ENCODE measurements at regions of chr20 and their contacts with region 1.

Region 1: GRCh38 chr20:16279320-16279719 is 293.9 kb downstream of the KIF16B start:
- DNase-seq: peak in 1 of 2 experiments; percentile 31
- ATAC-seq: peak in 1 of 2 experiments; percentile 72; a peak in 4 of 6 replicates
- H3K4me3 ChIP-seq: no peak overlapping the region
- H3K27ac ChIP-seq: no peak overlapping the region
- H3K4me1 ChIP-seq: no peaks in the 10 kb centered on the region
- CTCF ChIP-seq: no peak
- EP300 ChIP-seq: no peak
- POLR2A ChIP-seq: no peak
- RAD21 ChIP-seq: peak; percentile 24 to 37; a peak in 2 of 5 replicates

Region 2: DNA sequence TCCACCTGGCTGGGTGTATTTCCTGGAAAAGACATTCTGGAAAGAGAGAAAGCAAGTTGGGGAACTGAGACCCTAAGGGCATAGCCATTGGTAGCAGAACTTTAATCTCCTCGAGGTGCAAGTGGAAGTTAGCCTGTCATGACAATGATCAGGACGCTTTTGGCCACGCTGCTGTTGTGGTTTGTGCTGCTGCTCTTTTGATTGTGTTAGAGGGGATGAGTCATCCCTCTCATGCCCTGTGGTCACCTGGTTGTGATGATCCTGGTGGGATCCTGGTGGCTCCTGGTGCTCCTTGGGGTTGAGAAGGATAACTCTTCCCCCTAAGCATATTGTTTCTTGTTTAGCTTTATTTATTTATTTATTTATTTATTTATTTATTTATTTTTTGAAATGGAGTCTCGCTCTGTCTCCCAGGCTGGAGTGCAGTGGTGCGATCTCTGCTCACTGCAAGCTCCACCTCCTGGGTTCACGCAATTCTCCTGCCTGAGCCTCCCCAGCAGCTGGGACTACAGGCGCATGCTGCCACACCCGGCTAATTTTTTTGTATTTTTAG is 56.4 kb before region 1 on chr20:
- CTCF ChIA-PET with region 1: no interaction called
- POLR2A ChIA-PET with region 1: no interaction called
- DNase-seq: no peak
- ATAC-seq: no peak
- H3K4me3 ChIP-seq: no peak overlapping the region
- H3K27ac ChIP-seq: no peak overlapping the region
- H3K4me1 ChIP-seq: no peaks in the 10 kb centered on the region
- CTCF ChIP-seq: no peak
- EP300 ChIP-seq: no peak
- POLR2A ChIP-seq: no peak
- RAD21 ChIP-seq: no peak

Region 3: DNA sequence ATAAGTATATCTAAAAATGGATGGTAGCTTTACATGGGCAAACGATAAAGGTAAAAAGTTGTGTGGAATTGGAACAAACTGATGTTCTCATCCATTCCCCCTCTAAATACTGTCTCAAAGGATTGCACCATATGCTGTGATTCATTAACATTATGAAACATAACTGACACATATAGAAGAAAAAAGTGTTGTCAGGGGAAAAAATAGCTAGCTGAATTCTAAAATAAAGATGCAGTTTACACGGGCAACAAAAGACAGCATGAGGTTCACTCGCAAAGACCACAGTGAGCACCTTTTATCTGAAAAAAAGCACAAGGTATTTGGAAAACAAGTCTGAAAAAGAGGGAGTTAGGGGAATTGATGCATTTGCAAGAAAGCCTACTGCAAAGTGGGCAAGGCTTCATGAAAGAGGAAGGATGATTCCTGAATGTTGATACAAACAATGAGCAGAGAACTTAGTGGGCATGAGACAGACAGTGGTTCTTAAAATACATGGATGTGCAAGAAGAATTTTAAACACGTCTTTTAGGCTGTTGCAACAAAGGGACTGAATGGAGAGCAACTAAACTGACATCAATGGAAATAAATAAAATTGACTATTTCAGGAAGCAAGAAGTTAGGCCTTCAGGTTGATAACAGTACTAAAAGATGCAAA is 13.0 kb after region 1 on chr20:
- CTCF ChIA-PET with region 1: interaction called, 10 read pairs
- POLR2A ChIA-PET with region 1: no interaction called
- DNase-seq: no peak
- ATAC-seq: no peak
- H3K4me3 ChIP-seq: no peak overlapping the region
- H3K27ac ChIP-seq: peak overlapping the region in 1 of 2 experiments; percentile 42; a peak in 1 of 6 replicates
- H3K4me1 ChIP-seq: peaks cover 33% of the 10 kb centered on the region
- CTCF ChIP-seq: no peak
- EP300 ChIP-seq: no peak
- POLR2A ChIP-seq: no peak
- RAD21 ChIP-seq: no peak

Region 4: GRCh38 chr20:16308754-16309153 is 29.4 kb after region 1 on chr20:
- CTCF ChIA-PET with region 1: no interaction called
- POLR2A ChIA-PET with region 1: no interaction called
- DNase-seq: no peak
- ATAC-seq: no peak
- H3K4me3 ChIP-seq: no peak overlapping the region
- H3K27ac ChIP-seq: no peak overlapping the region
- H3K4me1 ChIP-seq: no peaks in the 10 kb centered on the region
- CTCF ChIP-seq: no peak
- EP300 ChIP-seq: no peak
- POLR2A ChIP-seq: no peak
- RAD21 ChIP-seq: no peak

Region 5: DNA sequence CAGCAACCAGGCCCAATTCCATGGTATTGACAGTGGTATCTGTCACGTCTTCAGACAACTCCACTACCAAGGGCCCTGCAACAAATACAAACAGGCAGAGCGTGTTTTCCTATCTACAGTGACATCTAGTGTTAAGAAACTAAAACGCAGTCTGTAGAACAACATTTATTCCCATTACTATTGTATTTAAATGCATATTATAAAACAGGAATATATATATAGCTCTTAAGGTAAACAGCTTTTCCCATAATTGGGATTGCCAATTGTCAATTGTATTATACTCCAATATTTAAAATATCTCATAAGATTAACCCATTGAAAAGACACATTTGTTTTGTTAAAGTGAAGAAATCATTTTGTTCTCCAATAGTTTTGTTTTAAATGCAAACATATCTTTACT is 196.7 kb after region 1 on chr20:
- CTCF ChIA-PET with region 1: interaction called, 13 read pairs
- POLR2A ChIA-PET with region 1: no interaction called
- DNase-seq: peak; percentile 30 to 64
- ATAC-seq: peak; percentile 74 to 87
- H3K4me3 ChIP-seq: no peak overlapping the region
- H3K27ac ChIP-seq: no peak overlapping the region
- H3K4me1 ChIP-seq: peaks cover 20% of the 10 kb centered on the region
- CTCF ChIP-seq: peak; percentile 85
- EP300 ChIP-seq: no peak
- POLR2A ChIP-seq: no peak
- RAD21 ChIP-seq: peak; percentile 75 to 87